ENCODE measurements at regions of chr18 and their contacts with region 1.

Region 1: DNA sequence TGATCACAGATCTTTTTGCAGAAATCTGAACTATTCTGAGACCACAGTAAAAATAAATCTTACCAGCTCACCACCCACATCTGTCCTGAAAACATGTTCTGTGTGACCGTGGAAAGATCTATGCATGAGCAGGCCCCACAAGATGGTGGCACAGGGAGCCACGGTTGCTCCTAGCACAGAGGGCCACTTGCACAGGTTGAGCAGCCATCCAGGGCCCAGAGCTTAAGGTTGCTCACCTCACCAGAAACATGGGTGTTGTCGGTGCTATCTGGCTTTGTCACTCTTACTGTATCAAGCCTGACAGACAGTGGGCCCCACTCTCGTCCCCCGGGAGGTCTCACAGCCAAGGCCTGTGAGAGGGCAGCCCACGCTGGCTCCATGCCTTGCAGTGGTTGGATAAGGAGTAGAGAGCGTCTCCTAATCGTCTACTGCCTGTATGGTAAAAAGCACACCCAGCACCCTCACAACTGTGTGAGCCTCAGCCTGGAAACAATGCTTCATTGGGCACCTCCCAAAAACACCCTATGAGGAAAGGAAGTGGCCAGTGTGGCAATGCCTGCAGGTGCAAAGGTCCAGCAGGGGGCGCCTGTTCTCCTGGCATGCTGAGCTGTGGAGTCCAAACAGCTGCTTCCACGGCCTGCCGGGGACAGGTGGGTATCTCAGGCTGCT is 19.6 kb downstream of the TUBB6 start:
- DNase-seq: peak; percentile 80
- H3K4me3 Mint-ChIP-seq: no peak overlapping the region
- H3K27ac Mint-ChIP-seq: peak overlapping the region; percentile 31
- H3K4me1 Mint-ChIP-seq: peaks cover 12% of the 10 kb centered on the region
- H3K27me3 Mint-ChIP-seq: no peaks in the 10 kb centered on the region

Region 2: DNA sequence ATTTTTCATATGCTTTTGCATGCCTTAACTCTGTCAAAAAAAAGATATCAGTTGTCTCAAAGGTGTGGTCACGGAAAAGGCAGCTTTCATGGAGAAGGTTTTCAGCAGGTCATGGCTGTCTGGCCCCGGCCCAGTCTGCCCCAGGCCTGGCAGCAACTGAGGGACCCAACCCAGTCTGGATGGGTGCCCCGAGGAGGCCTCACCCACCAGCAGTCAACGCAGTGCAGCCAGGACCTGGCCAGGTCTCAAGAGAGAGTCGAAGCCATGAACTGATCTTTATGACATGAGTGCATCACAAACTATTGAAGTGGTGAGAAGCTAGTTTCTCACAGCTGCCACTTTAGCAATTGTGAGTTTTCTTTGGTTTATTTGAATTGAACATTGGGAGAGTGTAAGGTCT is 11.7 kb before region 1 on chr18:
- CTCF ChIA-PET with region 1: interaction called, 11 read pairs
- POLR2A ChIA-PET with region 1: no interaction called
- DNase-seq: no peak
- H3K4me3 Mint-ChIP-seq: no peak overlapping the region
- H3K27ac Mint-ChIP-seq: no peak overlapping the region
- H3K4me1 Mint-ChIP-seq: no peaks in the 10 kb centered on the region
- H3K27me3 Mint-ChIP-seq: peaks cover 10% of the 10 kb centered on the region

Region 3: DNA sequence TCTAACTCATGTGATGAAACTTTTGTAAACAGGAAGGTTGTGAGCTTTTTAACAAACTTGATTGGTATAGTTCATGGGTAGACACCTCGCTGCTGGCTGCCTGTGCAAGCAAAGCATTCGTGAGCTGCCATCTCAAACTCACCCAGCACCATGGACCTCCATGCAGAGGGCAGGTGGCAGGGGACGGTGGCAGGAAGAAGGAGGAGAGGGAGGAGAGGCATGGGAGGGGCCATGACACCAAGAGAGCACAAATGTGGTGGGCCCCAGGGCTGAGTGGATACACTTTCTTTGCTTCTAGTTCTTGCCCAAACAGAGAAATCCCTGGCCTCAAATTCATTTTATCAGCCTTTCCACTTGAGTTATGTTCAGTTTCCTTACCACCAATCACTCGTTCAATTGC is 20.3 kb after region 1 on chr18:
- CTCF ChIA-PET with region 1: interaction called, 14 read pairs
- POLR2A ChIA-PET with region 1: no interaction called
- DNase-seq: no peak
- H3K4me3 Mint-ChIP-seq: no peak overlapping the region
- H3K27ac Mint-ChIP-seq: no peak overlapping the region
- H3K4me1 Mint-ChIP-seq: no peaks in the 10 kb centered on the region
- H3K27me3 Mint-ChIP-seq: no peaks in the 10 kb centered on the region